Naive thymus-derived CD4-positive, alpha-beta T cell (primary cell): ENCODE measurements at regions of chr3 and their contacts with region 1.

Region 1: DNA sequence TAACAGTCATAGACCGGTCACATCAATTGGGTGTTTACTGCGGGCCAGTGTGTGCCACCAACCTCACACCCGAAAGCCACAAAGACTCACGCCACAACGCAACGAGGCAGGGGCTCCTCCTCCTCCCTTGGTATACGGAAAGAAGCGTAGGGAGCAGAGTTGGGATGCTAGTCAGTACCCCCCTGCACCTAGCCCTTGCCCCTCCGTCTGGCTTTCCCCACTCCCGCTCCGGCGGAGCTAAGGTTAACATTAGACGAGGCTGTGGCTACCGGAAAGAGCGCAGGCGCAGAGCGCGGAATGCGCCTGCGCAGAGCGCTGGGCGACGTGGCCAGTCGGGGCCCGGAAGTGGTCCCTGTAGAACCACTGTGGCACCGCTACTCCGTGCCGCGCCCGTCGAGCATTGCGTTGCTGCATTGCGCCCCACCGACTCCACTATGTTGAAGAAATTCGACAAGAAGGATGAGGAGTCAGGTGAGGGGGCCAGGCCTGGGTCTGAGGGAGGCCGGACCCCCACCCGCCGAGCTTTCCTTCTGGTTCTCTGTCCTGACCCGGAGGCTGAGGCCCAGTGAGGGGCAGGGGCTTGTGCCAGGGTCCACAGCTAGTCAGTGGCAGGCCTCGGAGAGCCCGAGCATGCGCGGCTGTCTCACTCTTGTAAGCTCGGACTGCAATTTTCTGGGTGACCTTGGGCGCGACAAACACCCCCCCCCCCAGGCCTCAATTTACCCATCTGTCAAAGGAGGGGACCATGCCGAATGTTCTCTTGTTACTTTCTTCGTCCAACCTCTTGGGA is at the start of gene COPG1:
- DNase-seq: peak; percentile 78 to 93 (median 89)
- ATAC-seq: peak; percentile 91
- H3K4me3 ChIP-seq: peak within 1 kb of the TSS; percentile 73
- H3K4me3 Mint-ChIP-seq: peak within 1 kb of the TSS; percentile 89 to 99 (median 95)
- H3K27ac ChIP-seq: peak within 1 kb of the TSS; percentile 98
- H3K27ac Mint-ChIP-seq: peak within 1 kb of the TSS; percentile 91 to 99 (median 96)
- H3K4me1 ChIP-seq: peaks cover 21 to 22% of the 10 kb centered on the region in 2 donors
- H3K4me1 Mint-ChIP-seq: peaks cover 29 to 65% (median 53%) of the 10 kb centered on the region in 7 donors
- H3K27me3 ChIP-seq: no peaks in the 10 kb centered on the region
- H3K27me3 Mint-ChIP-seq: peaks cover 0 to 4% (median 0%) of the 10 kb centered on the region in 5 donors
- total RNA-seq, gene COPG1: 83.3 to 177 (median 103) TPM

Region 2: DNA sequence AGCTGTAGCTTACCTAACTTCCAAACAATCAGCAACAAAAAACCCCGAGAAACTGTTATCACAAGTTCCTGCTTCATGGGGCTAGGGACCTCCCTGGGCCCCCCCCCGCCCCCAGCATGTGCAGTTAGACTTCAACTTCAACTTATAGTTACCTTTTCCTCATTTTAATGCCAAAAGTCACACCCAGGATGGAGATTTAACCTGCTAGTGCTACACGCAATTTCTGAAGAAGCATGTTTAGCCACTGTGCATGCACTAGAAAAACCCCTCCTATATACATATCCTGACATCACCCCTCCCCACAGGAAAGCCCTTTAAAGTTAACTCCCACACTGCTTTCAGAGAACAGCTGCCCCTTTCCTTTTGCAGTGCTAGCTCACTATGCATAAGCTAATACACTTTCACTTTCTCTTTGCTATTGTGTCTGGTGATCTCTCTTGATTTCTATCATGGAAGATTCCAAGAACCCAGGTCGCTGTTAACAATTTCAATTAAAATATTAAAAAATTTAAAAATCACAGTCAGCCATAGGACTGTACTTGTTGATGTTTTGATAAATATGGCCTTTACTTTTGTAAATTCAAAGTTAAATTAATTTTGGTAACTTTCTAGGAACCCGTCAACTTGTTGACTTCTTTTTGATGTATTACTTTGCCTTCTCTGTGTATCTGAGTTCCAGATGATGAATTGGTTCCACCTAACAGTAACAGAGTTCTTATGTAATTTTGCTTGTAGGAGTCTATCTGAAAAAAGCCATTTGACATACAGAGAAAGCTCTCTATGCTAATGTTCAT is 445.3 kb before region 1 on chr3:
- CTCF ChIA-PET with region 1: no interaction called
- POLR2A ChIA-PET with region 1: no interaction called
- intact Hi-C with region 1: loop called in 1 of 2 experiments (anchors 5 kb)
- DNase-seq: peak in 8 of 9 donors; percentile 54 to 88 (median 84)
- ATAC-seq: peak; percentile 92
- H3K4me3 ChIP-seq: peak overlapping the region; percentile 49
- H3K4me3 Mint-ChIP-seq: peak overlapping the region; percentile 48 to 89 (median 80)
- H3K27ac ChIP-seq: peak overlapping the region; percentile 74
- H3K27ac Mint-ChIP-seq: peak overlapping the region; percentile 91 to 98 (median 96)
- H3K4me1 ChIP-seq: peaks cover 22 to 64% of the 10 kb centered on the region in 2 donors
- H3K4me1 Mint-ChIP-seq: peaks cover 59 to 91% (median 85%) of the 10 kb centered on the region in 7 donors
- H3K27me3 ChIP-seq: no peaks in the 10 kb centered on the region
- H3K27me3 Mint-ChIP-seq: no peaks in the 10 kb centered on the region

Region 3: DNA sequence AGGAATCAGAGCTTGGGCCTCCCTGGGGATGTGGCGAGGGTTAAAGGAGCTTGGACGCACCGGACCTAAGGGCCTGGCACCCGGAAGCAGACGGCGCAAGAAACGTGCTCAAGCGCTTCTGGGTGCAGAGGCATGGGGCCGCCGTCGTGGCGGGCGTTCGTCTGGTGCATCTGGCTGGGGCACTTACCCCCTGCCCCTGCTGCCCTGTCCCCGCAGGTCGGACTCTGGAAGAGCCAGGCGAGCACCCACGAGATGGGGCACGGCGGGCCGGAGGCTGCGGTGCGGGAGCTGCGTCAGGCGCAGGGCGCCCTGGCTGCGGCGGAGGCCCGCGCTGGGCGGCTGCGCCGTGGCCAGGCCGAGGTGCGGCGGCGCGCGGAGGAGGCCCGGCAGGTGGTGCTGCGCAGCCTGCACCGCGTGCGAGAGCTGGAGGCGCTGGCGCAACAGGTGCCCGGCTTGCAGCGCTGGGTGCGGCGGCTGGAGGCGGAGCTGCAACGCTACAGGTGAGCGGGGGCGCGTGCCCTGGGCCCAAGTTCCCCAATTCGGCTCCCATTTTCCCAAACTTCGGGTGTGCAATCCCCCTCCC is 245.8 kb before region 1 on chr3:
- CTCF ChIA-PET with region 1: interaction called, 13 read pairs
- POLR2A ChIA-PET with region 1: interaction called, 5 read pairs
- intact Hi-C with region 1: loop called in 1 of 2 experiments (anchors 1 kb)
- DNase-seq: peak; percentile 46 to 70 (median 62)
- ATAC-seq: peak; percentile 94
- H3K4me3 ChIP-seq: no peak overlapping the region
- H3K4me3 Mint-ChIP-seq: peak overlapping the region; percentile 55 to 84 (median 72)
- H3K27ac ChIP-seq: no peak overlapping the region
- H3K27ac Mint-ChIP-seq: peak overlapping the region in 3 of 9 donors; percentile 19 to 72 (median 68)
- H3K4me1 ChIP-seq: peaks cover 5 to 33% of the 10 kb centered on the region in 2 donors
- H3K4me1 Mint-ChIP-seq: peaks cover 29 to 62% (median 52%) of the 10 kb centered on the region in 7 donors
- H3K27me3 ChIP-seq: peaks cover 5 to 8% of the 10 kb centered on the region in 2 donors
- H3K27me3 Mint-ChIP-seq: peaks cover 13 to 61% (median 24%) of the 10 kb centered on the region in 5 donors

Region 4: GRCh38 chr3:129026728-129027543 is 222.5 kb before region 1 on chr3:
- CTCF ChIA-PET with region 1: interaction called, 11 read pairs
- POLR2A ChIA-PET with region 1: interaction called, 12 read pairs
- intact Hi-C with region 1: loop called (anchors 1 kb)
- DNase-seq: peak; percentile 84 to 94 (median 93)
- ATAC-seq: peak; percentile 99
- H3K4me3 ChIP-seq: peak overlapping the region; percentile 67
- H3K4me3 Mint-ChIP-seq: peak overlapping the region; percentile 69 to 88 (median 86)
- H3K27ac ChIP-seq: peak overlapping the region; percentile 74
- H3K27ac Mint-ChIP-seq: peak overlapping the region; percentile 82 to 97 (median 93)
- H3K4me1 ChIP-seq: peaks cover 8 to 11% of the 10 kb centered on the region in 2 donors
- H3K4me1 Mint-ChIP-seq: peaks cover 13 to 31% (median 25%) of the 10 kb centered on the region in 7 donors
- H3K27me3 ChIP-seq: no peaks in the 10 kb centered on the region
- H3K27me3 Mint-ChIP-seq: peaks cover 0 to 3% (median 0%) of the 10 kb centered on the region in 5 donors

Region 5: DNA sequence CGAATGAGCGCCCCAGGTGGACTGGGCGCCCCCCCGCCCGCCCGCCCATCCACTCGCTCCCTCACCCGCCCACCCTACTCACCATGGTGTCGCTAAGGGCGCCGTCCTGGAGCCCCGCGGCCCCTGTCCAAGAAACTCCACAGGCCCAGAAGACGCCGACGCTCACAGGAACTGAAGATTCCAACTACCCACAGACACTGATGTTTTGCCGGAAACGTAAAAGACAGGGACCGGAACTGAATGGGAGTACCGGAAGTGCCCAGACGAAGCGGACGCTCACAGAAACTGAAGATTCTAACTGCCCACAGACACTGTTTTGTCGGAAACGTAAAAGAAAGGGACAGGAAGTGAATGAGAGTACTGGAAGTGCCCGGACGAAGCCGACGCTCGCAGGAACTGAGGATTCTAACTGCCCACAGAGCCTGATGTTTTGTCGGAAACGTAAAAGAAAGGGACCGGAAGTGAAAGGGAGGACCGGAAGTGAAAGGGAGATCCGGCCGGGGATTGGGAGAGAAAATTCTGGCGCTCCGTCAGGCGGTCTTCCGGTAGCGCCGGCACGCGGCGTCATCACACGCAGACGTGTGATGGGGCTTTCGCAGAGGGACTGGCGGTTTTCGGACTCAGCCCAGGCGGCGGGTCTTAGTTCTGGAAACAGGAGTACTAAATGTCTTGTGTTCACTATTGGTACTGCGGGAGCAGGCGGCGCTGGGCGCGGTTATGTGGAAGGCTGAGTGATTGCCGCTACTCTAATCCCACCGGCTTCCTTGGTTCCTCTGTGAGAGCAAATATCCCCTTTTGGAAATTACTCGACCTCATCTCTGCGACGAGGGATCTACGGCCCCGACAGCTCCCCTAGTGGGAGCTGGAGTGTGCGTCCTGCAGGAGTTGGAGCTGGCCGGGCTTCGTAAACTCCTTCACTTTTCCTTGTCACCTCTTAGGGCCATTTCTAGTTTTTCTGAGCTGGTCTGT is 88.3 kb before region 1 on chr3 and contains the start of gene ISY1:
- CTCF ChIA-PET with region 1: interaction called, 3 read pairs
- POLR2A ChIA-PET with region 1: interaction called, 14 read pairs
- intact Hi-C with region 1: loop called (anchors 1 kb)
- DNase-seq: peak; percentile 68 to 92 (median 89)
- ATAC-seq: peak; percentile 90
- H3K4me3 ChIP-seq: peak within 1 kb of the TSS; percentile 94
- H3K4me3 Mint-ChIP-seq: peak within 1 kb of the TSS; percentile 84 to 100 (median 98)
- H3K27ac ChIP-seq: peak within 1 kb of the TSS; percentile 98
- H3K27ac Mint-ChIP-seq: peak within 1 kb of the TSS; percentile 97 to 100 (median 99)
- H3K4me1 ChIP-seq: peaks cover 22 to 24% of the 10 kb centered on the region in 2 donors
- H3K4me1 Mint-ChIP-seq: peaks cover 18 to 53% (median 40%) of the 10 kb centered on the region in 7 donors
- H3K27me3 ChIP-seq: no peaks in the 10 kb centered on the region
- H3K27me3 Mint-ChIP-seq: peaks cover 0 to 4% (median 0%) of the 10 kb centered on the region in 5 donors
- total RNA-seq, gene ISY1: 27.6 to 65.1 (median 37.4) TPM

Region 6: DNA sequence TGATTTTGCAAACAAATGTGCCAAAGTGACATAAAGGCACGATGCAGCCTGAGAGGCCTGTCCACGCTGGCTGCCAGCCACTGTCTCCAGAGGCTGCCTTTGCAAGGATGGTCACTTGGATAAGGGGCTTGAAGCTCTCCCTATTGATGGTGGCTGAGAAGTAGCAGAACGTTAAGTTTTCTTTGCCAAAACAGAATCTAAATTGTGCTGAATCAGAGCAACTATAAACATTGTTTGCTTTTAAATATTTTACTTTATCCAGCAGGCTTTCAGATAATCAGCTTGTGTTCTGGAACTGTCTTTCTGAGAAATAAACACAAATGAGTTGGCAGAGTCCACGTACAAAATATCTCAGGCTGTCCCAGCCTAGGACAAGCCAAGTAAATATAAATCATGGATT is 42.0 kb before region 1 on chr3:
- CTCF ChIA-PET with region 1: no interaction called
- POLR2A ChIA-PET with region 1: interaction called, 4 read pairs
- intact Hi-C with region 1: loop called in 1 of 2 experiments (anchors 2 kb)
- DNase-seq: no peak
- ATAC-seq: no peak
- H3K4me3 ChIP-seq: no peak overlapping the region
- H3K4me3 Mint-ChIP-seq: no peak overlapping the region
- H3K27ac ChIP-seq: no peak overlapping the region
- H3K27ac Mint-ChIP-seq: no peak overlapping the region
- H3K4me1 ChIP-seq: no peaks in the 10 kb centered on the region
- H3K4me1 Mint-ChIP-seq: peaks cover 0 to 6% (median 0%) of the 10 kb centered on the region in 7 donors
- H3K27me3 ChIP-seq: no peaks in the 10 kb centered on the region
- H3K27me3 Mint-ChIP-seq: peaks cover 0 to 6% (median 0%) of the 10 kb centered on the region in 5 donors